GM10248 (cell line): ENCODE measurements at regions of chr1 and their contacts with region 1.

Region 1: GRCh38 chr1:101288491-101288944 is 51.7 kb downstream of the S1PR1 start:
- DNase-seq: peak; percentile 54
- CTCF ChIP-seq: peak; percentile 75

Region 2: DNA sequence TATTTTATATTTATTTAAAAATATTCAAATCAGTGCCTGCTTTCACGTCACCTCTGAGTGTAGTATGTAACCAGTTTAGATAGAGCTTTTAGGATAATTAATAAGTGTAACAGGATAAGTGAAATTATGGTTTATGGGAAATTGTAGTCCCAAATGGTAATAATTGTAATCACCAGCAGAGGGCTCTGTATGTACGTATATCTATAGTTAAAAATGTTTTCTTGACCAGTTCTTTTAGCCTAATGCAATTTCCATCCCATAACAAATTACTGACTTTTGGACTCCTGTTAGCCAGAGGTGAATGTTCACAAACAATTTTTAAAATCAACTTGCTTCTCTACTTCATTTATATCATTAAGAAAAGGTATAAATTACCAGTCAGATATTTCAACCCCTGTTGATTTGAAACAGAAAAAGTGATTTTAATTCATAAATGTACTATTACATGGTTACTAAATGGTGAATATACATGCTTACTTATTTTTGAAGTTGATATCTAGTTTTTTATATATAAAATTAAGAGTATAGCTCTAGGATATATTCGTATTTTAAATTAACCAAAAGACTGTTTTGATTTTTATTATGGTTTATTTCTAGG is 367.3 kb before region 1 on chr1:
- CTCF ChIA-PET with region 1: interaction called, 49 read pairs
- POLR2A ChIA-PET with region 1: no interaction called
- DNase-seq: peak; percentile 30
- CTCF ChIP-seq: peak; percentile 67

Region 3: GRCh38 chr1:101136739-101137138 is 151.8 kb before region 1 on chr1:
- CTCF ChIA-PET with region 1: interaction called, 21 read pairs
- POLR2A ChIA-PET with region 1: no interaction called
- DNase-seq: peak; percentile 15
- CTCF ChIP-seq: peak; percentile 31

Region 4: GRCh38 chr1:101228424-101229134 is 59.9 kb before region 1 on chr1:
- CTCF ChIA-PET with region 1: no interaction called
- POLR2A ChIA-PET with region 1: no interaction called
- DNase-seq: no peak
- CTCF ChIP-seq: no peak

Region 5: GRCh38 chr1:101247404-101248287 is 40.9 kb before region 1 on chr1:
- CTCF ChIA-PET with region 1: interaction called, 25 read pairs
- POLR2A ChIA-PET with region 1: no interaction called
- DNase-seq: peak; percentile 64
- CTCF ChIP-seq: no peak

Region 6: DNA sequence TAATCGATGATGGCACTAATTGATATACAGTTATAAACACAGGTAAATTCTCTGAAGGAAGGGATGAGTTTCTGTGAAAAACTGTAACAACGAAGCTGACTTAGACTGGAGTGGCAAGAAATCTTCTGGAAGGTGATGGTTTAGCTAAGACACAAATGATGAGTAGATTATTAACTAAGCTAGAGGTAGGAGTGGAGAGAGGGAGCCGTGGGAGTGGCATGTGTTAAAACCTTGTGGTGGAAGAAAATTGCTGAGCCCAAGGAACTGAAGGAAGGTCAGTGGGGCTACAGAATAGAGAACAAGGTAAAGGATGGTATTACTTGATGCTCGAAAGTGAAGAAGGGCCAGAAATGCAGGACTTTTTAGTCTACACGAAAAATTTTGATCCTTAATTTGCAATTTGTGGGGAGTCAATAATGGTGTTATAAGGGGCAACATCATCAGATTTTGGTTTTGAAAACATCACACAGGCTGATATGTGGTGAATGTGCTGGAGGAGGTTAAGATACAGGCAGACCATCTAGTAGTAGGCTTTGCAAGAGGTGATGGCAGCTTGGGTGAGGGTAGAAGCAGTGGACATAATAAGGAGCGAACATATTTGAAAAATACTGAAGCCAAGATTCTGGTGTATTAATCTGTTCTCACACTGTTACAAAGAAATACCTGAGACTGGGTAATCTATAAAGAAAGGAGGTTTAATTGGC is 42.1 kb after region 1 on chr1:
- CTCF ChIA-PET with region 1: interaction called, 11 read pairs
- POLR2A ChIA-PET with region 1: no interaction called
- DNase-seq: no peak
- CTCF ChIP-seq: no peak

Region 7: GRCh38 chr1:101438359-101438758 is 149.8 kb after region 1 on chr1:
- CTCF ChIA-PET with region 1: interaction called, 10 read pairs
- POLR2A ChIA-PET with region 1: no interaction called
- DNase-seq: peak; percentile 38
- CTCF ChIP-seq: peak; percentile 58

Region 8: GRCh38 chr1:102628109-102628613 is 1339.6 kb after region 1 on chr1:
- CTCF ChIA-PET with region 1: no interaction called
- POLR2A ChIA-PET with region 1: no interaction called
- DNase-seq: no peak
- CTCF ChIP-seq: no peak